Endothelial cell of umbilical vein (primary cell): ENCODE measurements at regions of chr5 and their contacts with region 1.

Region 1: GRCh38 chr5:148796931-148797330 is 29.5 kb upstream of the ADRB2 start:
- DNase-seq: no peak
- H3K4me3 ChIP-seq: no peak overlapping the region
- H3K27ac ChIP-seq: no peak overlapping the region
- H3K4me1 ChIP-seq: no peaks in the 10 kb centered on the region
- H3K27me3 ChIP-seq: no peaks in the 10 kb centered on the region
- CTCF ChIP-seq: no peak
- POLR2A ChIP-seq: no peak

Region 2: GRCh38 chr5:148904440-148904839 is 107.5 kb after region 1 on chr5:
- CTCF ChIA-PET with region 1: no interaction called
- POLR2A ChIA-PET with region 1: interaction called, 10 read pairs
- dilution Hi-C with region 1: no loop called
- intact Hi-C with region 1: no loop called
- DNase-seq: no peak
- H3K4me3 ChIP-seq: no peak overlapping the region
- H3K27ac ChIP-seq: no peak overlapping the region
- H3K4me1 ChIP-seq: peaks cover 10% of the 10 kb centered on the region
- H3K27me3 ChIP-seq: no peaks in the 10 kb centered on the region
- CTCF ChIP-seq: no peak
- POLR2A ChIP-seq: no peak